Sciatic nerve (tissue), 2 donors: ENCODE measurements at regions of chr6 and their contacts with region 1.

Region 1: GRCh38 chr6:100464903-100465700 is at the start of gene SIM1:
- DNase-seq: no peak
- ATAC-seq: peak; percentile 68
- total RNA-seq, gene SIM1: 0.04 TPM

Region 2: DNA sequence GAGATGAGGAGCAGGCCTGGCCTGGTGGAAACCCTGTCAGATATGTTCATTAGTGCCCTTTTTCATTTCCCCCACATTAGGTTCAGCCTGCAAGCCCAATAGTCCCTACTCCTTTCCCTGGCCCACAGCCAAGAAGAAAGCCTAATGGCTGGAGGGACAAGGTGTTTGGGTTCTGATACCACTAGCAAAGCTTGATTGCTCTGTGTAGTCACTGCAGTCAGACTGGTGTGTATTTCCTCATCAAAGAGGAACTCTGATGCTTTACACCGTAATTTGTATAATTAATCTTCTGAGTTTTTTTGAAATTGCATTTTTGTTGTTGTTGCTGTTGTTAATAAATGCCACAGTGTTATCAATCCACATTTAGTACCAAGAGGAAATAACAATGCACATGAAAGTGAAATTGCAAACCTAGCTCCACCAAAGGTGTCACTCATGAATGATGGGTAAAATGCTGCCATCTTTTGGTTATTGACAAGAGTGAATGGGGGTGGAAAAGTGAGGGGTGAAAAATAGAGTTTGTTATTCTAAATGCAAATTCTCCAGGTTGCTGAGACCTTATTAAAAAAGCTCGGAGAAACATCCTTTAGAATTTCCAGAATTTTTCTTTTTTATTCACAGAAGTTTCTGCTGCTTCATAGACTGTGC is 1950.9 kb before region 1 on chr6:
- intact Hi-C with region 1: loop called (anchors 5 kb)
- DNase-seq: no peak
- ATAC-seq: no peak

Region 3: DNA sequence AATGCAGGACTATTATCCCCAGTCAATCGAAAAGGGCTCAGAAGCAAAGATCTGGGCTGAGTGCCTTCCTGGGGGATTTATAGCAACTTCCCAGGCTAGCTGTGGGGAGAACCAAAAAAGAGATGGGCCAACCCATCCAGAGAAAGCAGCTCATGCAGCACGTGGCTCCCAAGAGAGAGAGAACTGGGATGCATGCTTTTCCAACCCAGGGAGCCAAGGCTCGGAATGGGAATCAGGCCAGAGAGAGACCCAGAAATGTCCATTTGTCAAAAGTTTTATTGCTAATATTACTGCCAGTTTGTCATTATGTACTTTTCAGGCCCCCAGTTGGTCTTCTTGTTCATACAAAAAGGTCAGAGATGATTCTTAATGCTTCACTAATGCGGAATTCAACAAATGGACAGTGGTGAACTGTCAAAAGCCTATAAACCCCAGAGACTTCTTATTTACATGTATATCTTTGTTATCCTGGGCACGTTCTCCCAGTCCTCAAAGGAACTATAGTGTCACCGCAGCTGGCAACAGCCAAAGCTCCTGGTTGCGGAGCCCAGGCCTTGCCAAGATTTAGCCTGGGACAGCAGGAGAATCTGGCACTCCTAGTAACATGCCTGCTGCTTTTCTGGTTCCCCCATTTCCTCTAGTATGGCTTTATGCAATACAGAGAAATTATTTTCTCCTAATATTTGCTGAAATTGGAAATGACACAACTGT is 1769.9 kb before region 1 on chr6:
- intact Hi-C with region 1: no loop called
- DNase-seq: no peak
- ATAC-seq: no peak

Region 4: DNA sequence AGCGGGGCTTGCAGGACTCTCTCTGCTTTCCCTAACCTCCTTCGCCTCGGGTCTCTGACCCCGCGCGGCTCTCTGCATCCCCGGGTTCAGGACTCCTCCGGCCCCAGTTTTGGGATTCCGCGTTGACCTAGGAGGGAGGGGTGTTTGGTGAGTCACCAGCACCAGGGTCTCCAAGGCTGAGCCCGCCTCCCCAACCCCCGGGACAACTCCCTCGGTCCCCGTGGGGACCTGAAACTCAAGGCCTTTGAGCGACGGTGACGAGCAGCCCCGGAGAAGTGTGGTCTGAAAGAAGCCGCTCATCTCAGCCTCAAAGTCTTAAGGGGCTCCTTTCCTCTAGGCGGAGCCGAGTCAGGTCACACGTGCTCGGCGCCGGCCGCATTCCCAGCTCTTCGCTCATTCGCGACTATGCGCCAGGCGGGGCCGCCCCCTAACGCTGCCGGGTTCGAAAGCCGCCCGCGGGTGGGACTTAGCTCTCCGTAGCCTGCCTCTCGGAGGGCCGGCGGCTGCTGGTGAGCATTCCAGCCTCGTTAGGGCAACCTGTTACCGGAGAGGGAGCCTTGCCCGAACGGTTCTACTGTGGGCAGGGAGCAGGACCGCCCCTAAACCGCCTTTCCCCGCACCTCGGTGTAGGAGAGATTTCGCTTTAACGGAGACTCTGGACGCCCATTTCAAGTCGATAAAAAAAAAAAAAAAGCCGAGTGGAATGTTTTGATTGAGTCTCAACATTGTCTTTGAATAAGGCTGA is 861.5 kb before region 1 on chr6:
- intact Hi-C with region 1: loop called (anchors 10 kb)
- DNase-seq: no peak
- ATAC-seq: peak; percentile 33

Region 5: DNA sequence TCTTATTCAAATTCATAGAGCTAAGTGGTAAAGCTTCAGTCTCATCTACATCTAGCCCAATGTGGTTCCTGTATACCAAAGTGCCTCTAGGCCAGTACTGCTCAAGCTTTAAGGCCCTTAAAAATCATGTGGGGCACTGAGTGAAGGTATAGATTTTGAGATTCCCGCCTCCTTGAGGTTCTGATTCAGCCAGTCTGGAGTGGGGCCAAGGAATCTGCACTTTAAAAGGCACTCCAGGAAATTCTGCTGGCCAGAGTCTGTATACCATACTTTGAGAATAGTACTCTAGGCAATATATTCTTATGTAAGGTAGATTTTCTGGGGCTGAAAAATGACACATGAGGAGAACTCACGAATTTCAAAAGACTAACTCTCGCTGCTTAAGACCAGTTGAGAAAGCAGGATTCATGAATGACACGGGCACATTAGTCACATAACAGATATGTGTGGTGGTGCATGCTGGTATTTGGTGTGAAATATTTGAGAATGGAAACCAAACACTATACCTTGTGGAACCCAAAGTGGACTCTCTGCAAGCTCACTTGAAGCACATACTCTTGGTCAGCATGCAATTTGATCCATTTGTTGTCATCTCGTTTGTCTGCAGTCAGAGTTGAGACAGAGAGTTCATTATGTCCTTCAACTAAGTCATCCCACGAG is 47.2 kb after region 1 on chr6:
- intact Hi-C with region 1: no loop called
- DNase-seq: no peak
- ATAC-seq: no peak

Region 6: GRCh38 chr6:101114703-101115102 is 649.6 kb after region 1 on chr6:
- intact Hi-C with region 1: no loop called
- DNase-seq: no peak
- ATAC-seq: no peak